HepG2 (cell line): ENCODE measurements at regions of chr18 and their contacts with region 1.

Region 1: GRCh38 chr18:63177919-63178821 is 141.4 kb downstream of the BCL2 start:
- DNase-seq: no peak
- ATAC-seq: no peak
- H3K4me3 ChIP-seq: no peak overlapping the region
- H3K27ac ChIP-seq: no peak overlapping the region
- H3K4me1 ChIP-seq: no peaks in the 10 kb centered on the region
- H3K27me3 ChIP-seq: peaks cover 0 to 30% of the 10 kb centered on the region in 2 experiments; a peak in 4 of 5 replicates
- CTCF ChIP-seq: no peak
- EP300 ChIP-seq: no peak
- POLR2A ChIP-seq: no peak
- RAD21 ChIP-seq: no peak

Region 2: DNA sequence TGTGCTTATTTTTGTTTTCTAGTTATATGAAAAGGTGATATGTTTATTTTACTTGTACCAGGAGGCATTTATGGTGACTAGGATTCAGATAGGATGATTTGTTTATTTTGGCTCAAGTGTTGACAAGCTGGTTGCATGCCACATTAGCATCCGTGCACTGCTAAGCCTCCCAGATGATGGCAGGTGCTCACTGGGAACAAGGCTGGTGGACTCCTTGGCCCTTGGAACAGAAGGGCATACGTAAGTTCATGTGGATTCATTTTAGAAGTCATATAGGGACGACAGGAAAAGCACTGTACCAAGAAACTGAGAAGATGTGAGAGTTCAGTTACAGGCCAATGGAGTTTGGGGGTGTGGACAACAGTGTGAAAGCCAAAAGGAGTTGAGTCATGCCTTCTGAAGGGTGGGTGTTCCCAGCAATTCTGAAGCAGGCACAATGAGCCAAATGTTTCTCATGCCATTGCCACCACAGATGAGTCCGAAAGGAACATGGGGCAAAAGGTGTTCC is 296.6 kb before region 1 on chr18:
- CTCF ChIA-PET with region 1: no interaction called
- POLR2A ChIA-PET with region 1: no interaction called
- in situ Hi-C with region 1: no loop called
- intact Hi-C with region 1: loop called (anchors 5 kb)
- DNase-seq: no peak
- ATAC-seq: no peak
- H3K4me3 ChIP-seq: no peak overlapping the region
- H3K27ac ChIP-seq: no peak overlapping the region
- H3K4me1 ChIP-seq: peaks cover 9% of the 10 kb centered on the region
- H3K27me3 ChIP-seq: no peaks in the 10 kb centered on the region
- CTCF ChIP-seq: no peak
- EP300 ChIP-seq: no peak
- POLR2A ChIP-seq: no peak
- RAD21 ChIP-seq: no peak

Region 3: DNA sequence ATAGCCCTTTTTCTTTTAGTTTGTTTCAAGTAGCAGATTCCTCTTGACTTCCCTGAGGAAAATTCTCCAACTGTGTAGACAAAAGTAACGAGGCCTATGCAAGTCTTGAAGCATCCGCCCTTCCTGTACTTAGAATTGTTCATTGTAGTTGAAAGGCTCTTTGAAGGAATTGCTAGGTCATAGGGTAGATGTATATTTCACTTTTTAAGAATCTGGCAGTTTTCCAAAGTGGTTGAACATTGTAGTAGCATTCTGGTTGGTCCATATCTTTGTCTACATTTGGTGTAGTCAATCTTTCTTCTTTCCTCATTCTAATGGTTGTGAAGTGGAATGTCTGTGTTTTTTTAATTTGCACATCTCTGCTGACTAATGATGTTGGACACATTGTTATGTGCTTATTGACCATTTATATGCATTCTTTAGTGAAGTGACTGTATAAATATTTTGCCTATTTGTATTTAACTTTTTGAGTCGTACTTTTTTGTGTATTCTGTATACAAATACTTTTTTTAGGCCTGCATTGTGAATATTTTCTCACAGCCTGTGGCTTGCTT is 519.0 kb after region 1 on chr18:
- CTCF ChIA-PET with region 1: no interaction called
- POLR2A ChIA-PET with region 1: no interaction called
- in situ Hi-C with region 1: no loop called
- intact Hi-C with region 1: loop called (anchors 5 kb)
- DNase-seq: no peak
- ATAC-seq: no peak
- H3K4me3 ChIP-seq: no peak overlapping the region
- H3K27ac ChIP-seq: no peak overlapping the region
- H3K4me1 ChIP-seq: no peaks in the 10 kb centered on the region
- H3K27me3 ChIP-seq: no peaks in the 10 kb centered on the region
- CTCF ChIP-seq: no peak
- EP300 ChIP-seq: no peak
- POLR2A ChIP-seq: no peak
- RAD21 ChIP-seq: no peak

Region 4: GRCh38 chr18:63725682-63726480 is 547.7 kb after region 1 on chr18:
- CTCF ChIA-PET with region 1: no interaction called
- POLR2A ChIA-PET with region 1: no interaction called
- in situ Hi-C with region 1: no loop called
- intact Hi-C with region 1: no loop called
- DNase-seq: no peak
- ATAC-seq: no peak
- H3K4me3 ChIP-seq: no peak overlapping the region
- H3K27ac ChIP-seq: no peak overlapping the region
- H3K4me1 ChIP-seq: no peaks in the 10 kb centered on the region
- H3K27me3 ChIP-seq: no peaks in the 10 kb centered on the region; a peak in 1 of 5 replicates
- CTCF ChIP-seq: no peak
- EP300 ChIP-seq: no peak
- POLR2A ChIP-seq: no peak
- RAD21 ChIP-seq: no peak